MCF 10A (cell line): ENCODE measurements at regions of chr6 and their contacts with region 1.

Region 1: DNA sequence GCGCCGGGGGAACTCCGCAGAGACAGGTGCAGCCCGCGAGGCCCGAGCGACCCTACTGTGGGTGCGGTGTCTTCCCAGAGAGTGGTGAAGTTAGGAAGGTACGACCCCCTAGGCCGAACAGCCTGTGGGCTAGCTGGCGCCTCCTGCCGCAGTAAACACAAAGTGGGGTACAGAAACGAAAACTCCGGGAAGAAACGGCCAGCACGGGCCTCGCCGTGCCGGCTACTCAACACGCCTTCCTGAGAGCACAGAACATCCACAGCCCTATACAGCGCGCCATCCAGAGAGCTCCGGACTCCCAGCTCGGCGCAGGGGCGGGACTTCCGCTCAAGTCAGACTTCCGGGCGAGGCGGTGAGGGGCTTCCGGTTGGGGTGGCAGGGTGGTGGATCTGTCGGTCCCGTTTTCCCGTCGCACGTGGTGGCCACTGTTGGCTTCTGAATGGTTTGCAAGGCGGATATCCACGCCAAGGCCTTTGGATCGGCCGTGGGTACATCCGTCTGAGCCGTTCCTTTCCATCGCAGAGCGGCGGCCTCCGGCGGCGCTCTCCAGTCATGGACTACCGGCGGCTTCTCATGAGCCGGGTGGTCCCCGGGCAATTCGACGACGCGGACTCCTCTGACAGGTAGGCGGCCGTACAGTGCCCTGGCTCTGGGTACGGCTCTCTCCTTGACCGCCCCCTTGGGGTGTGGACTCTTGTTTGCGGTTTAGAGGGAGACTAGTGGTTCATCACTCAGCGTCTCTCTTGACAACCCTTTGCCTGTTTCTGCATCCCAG is at the starts of genes CAGE1 and RIOK1:
- DNase-seq: peak; percentile 98
- H3K4me3 Mint-ChIP-seq: peak within 1 kb of the TSS; percentile 77
- H3K27ac Mint-ChIP-seq: peak within 1 kb of the TSS; percentile 87
- H3K4me1 Mint-ChIP-seq: peaks cover 38% of the 10 kb centered on the region
- H3K27me3 Mint-ChIP-seq: no peaks in the 10 kb centered on the region
- CTCF ChIP-seq: no peak
- total RNA-seq, gene CAGE1: 0.33 and 0.47 TPM in 2 replicates
- total RNA-seq, gene RIOK1: 34.2 and 40.9 TPM in 2 replicates

Region 2: DNA sequence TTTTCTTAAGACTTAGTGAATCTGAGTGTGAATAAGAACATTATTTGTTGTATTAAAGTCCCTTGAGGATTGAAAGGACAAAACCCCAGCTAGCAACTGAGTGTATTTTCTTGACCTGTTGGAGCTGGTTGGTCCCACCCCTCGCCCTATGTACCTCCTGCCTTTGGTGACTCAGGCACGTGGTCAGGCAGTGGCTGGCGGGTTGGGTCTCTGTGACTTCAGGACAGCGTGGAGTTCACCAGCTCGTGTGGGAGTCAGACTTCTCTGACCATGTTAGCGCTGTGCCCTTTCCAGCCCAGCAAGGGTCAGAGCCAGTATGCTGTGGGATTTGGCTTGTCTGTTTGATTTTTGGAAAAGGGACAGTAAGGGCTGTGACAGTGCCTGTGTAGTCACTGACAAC is 170.3 kb before region 1 on chr6:
- CTCF ChIA-PET with region 1: no interaction called
- POLR2A ChIA-PET with region 1: no interaction called
- intact Hi-C with region 1: no loop called
- DNase-seq: no peak
- H3K4me3 Mint-ChIP-seq: no peak overlapping the region
- H3K27ac Mint-ChIP-seq: no peak overlapping the region
- H3K4me1 Mint-ChIP-seq: no peaks in the 10 kb centered on the region
- H3K27me3 Mint-ChIP-seq: no peaks in the 10 kb centered on the region
- CTCF ChIP-seq: no peak

Region 3: DNA sequence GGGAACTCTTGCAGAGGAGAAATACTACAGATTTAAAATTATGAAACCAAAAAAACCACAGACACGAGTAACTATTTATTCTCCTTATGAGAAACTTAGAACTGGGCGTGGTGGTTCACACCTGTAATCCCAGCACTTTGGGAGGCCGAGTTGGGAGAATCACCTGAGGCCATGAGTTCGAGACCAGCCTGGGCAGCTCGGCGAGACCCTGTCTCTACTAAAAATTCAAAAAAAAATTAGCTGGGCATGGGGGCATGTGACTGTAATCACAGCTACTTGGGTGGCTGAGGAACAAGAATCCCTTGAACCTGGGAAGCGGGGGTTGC is 113.5 kb before region 1 on chr6:
- CTCF ChIA-PET with region 1: interaction called, 16 read pairs
- POLR2A ChIA-PET with region 1: interaction called, 12 read pairs
- intact Hi-C with region 1: no loop called
- DNase-seq: no peak
- H3K4me3 Mint-ChIP-seq: no peak overlapping the region
- H3K27ac Mint-ChIP-seq: no peak overlapping the region
- H3K4me1 Mint-ChIP-seq: peaks cover 14% of the 10 kb centered on the region
- H3K27me3 Mint-ChIP-seq: no peaks in the 10 kb centered on the region
- CTCF ChIP-seq: no peak

Region 4: DNA sequence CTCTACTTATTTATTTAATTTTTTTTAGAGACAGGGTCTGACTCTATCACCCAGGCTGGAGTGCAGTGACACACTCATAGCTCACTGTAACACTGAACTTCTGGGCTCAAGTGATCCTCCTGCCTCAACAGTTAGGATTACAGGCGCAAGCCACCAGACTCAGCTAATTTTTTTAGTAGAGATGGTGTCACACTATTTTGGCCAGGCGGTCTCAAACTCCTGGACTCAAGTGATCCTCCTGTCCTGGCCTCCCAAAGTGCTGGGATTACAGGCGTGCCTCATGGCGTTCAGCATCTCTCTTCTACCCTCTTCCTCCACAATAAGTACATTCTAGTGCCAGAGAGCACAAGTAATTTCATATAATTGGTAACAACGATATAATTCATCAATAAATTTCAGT is 82.1 kb before region 1 on chr6:
- CTCF ChIA-PET with region 1: interaction called, 14 read pairs
- POLR2A ChIA-PET with region 1: interaction called, 114 read pairs
- intact Hi-C with region 1: no loop called
- DNase-seq: no peak
- H3K4me3 Mint-ChIP-seq: no peak overlapping the region
- H3K27ac Mint-ChIP-seq: peak overlapping the region; percentile 76
- H3K4me1 Mint-ChIP-seq: peaks cover 29% of the 10 kb centered on the region
- H3K27me3 Mint-ChIP-seq: no peaks in the 10 kb centered on the region
- CTCF ChIP-seq: no peak

Region 5: DNA sequence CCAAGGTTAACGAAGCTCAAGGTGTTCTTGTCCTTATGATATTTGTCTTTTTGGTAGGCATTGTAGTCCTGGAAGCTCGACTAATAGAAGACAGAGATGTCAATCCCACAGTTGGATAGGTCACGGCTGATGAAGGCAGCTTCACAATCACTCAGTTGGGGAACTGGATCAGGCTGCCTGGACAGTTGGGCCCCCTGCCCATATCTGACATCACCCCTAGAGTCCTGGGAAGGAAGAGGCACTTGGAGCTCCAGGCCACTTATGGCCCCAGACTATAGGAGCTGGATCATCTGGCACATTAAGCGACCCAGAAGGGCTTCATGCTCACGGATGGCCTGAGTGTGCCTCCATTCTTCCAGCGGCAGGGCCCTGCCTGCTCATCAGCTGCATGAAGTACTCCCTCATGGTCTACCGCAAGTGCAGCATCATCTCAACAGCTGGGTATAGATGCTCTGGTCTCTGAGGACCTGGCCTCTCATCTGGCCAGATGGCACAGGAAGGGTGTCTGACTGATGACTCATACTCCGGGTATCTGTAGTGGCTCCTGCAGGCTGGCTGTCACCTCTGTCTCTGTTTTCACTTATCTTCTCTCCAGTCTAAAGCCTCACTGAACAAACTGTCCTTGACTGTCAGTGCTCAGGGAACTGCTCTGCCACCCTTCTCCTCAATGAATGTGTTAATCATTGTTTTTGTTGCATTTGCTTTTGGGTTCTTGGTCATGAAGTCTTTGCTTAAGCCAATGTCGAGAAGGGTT is 47.5 kb before region 1 on chr6:
- CTCF ChIA-PET with region 1: no interaction called
- POLR2A ChIA-PET with region 1: interaction called, 18 read pairs
- intact Hi-C with region 1: loop called (anchors 2 kb)
- DNase-seq: peak; percentile 23
- H3K4me3 Mint-ChIP-seq: no peak overlapping the region
- H3K27ac Mint-ChIP-seq: peak overlapping the region; percentile 82
- H3K4me1 Mint-ChIP-seq: peaks cover 7% of the 10 kb centered on the region
- H3K27me3 Mint-ChIP-seq: no peaks in the 10 kb centered on the region
- CTCF ChIP-seq: no peak

Region 6: GRCh38 chr6:7468382-7469081 is 78.9 kb after region 1 on chr6:
- CTCF ChIA-PET with region 1: no interaction called
- POLR2A ChIA-PET with region 1: interaction called, 10 read pairs
- intact Hi-C with region 1: no loop called
- DNase-seq: peak; percentile 77
- H3K4me3 Mint-ChIP-seq: peak overlapping the region; percentile 72
- H3K27ac Mint-ChIP-seq: peak overlapping the region; percentile 83
- H3K4me1 Mint-ChIP-seq: peaks cover 30% of the 10 kb centered on the region
- H3K27me3 Mint-ChIP-seq: no peaks in the 10 kb centered on the region
- CTCF ChIP-seq: no peak

Region 7: DNA sequence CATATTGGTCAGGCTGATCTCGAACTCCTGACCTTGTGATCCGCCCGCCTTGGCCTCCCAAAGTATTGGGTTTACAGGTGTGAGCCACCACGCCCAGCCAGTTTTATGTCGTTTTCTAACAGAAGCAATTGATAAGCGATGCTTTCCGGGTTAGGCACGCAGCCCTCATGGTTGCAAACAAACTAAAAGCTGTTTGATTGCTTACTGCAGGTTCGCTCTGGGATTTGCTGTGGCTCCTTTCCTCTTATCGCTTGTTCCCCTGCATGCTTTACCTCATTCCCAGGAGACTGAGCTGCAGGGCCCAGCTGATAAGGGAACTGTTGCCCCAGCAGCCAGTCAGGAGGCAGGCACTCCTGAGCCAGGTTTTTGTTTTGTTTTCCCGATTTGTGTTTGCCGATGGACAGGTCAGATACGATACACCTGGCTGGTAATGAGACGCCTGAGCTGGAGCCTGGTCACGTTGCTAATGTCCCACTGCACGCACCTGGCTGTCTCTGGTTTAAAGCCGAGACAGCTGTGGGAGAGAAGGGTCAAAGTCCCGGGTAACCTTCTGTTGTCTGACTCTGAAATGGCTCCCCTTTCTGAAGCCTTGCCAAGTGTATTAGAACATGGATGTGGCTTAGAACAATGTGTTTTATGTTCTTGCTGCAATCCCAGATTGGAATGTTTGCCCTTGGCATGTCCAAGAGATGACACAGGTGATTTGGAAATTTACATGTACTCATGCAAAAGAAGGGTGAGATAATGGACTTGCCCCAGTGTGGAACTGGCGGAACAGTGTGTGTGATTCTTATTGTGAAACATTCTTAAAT is 171.7 kb after region 1 on chr6:
- CTCF ChIA-PET with region 1: no interaction called
- POLR2A ChIA-PET with region 1: interaction called, 22 read pairs
- intact Hi-C with region 1: no loop called
- DNase-seq: peak; percentile 93
- H3K4me3 Mint-ChIP-seq: peak overlapping the region; percentile 64
- H3K27ac Mint-ChIP-seq: peak overlapping the region; percentile 88
- H3K4me1 Mint-ChIP-seq: peaks cover 27% of the 10 kb centered on the region
- H3K27me3 Mint-ChIP-seq: no peaks in the 10 kb centered on the region
- CTCF ChIP-seq: no peak